ENCODE measurements at regions of chr6 and their contacts with region 1.

Region 1: GRCh38 chr6:7615611-7616383 is 25.8 kb downstream of the SNRNP48 start:
- DNase-seq: peak; percentile 18 to 57
- ATAC-seq: peak; percentile 72 to 80; a peak in 5 of 6 replicates
- H3K4me3 ChIP-seq: no peak overlapping the region
- H3K27ac ChIP-seq: peak overlapping the region; percentile 43 to 63
- H3K4me1 ChIP-seq: peaks cover 10% of the 10 kb centered on the region; the same call in 1 of the 3 replicates
- CTCF ChIP-seq: peak; percentile 77
- EP300 ChIP-seq: no peak
- POLR2A ChIP-seq: no peak
- RAD21 ChIP-seq: peak; percentile 83 to 84

Region 2: DNA sequence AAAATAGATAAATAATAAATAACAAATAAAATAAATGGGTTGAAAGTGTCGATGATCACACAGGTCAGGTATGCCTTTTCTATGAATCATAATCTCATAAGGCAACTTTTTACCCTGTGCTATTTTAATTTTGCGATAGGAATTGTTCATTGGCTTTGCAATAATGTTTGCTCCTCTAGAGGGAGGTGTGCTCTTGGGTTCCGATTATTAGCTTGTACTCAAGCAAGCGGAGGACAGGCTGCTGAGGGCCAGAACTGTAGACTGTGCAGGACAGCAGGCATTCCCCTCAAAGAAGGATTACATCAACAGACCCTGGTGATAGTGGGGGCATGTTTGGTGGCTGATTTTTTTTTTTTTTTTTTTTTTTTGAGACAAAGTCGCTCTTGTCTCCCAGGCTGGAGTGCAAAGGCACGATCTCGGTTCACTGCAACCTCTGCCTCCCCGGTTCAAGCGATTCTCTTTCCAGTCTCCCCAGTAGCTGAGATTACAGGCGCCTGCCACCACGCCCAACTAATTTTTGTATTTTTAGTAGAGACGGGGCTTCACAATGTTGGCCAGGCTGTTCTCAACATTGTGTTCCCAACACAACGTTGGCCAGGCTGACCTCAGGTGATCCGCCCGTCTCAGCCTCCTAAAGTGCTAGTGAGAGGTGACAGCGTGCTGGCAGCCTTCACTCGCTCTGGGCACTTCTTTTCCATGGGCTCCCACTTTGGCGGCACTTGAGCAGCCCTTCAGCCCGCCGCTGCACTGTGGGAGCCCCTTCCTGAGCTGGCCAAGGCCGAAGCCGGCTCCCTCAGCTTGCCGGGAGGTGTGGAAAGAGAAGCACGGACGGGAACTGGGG is 190.6 kb before region 1 on chr6:
- CTCF ChIA-PET with region 1: interaction called, 10 read pairs
- POLR2A ChIA-PET with region 1: no interaction called
- DNase-seq: peak; percentile 29 to 56
- ATAC-seq: peak; percentile 86 to 89
- H3K4me3 ChIP-seq: no peak overlapping the region
- H3K27ac ChIP-seq: no peak overlapping the region
- H3K4me1 ChIP-seq: 0 out of 3 replicates have a peak, but pooled peaks cover 4% of the 10 kb centered on the region
- CTCF ChIP-seq: peak; percentile 42; the same call in 2 of the 3 replicates
- EP300 ChIP-seq: no peak
- POLR2A ChIP-seq: no peak
- RAD21 ChIP-seq: peak; percentile 61 to 62

Region 3: DNA sequence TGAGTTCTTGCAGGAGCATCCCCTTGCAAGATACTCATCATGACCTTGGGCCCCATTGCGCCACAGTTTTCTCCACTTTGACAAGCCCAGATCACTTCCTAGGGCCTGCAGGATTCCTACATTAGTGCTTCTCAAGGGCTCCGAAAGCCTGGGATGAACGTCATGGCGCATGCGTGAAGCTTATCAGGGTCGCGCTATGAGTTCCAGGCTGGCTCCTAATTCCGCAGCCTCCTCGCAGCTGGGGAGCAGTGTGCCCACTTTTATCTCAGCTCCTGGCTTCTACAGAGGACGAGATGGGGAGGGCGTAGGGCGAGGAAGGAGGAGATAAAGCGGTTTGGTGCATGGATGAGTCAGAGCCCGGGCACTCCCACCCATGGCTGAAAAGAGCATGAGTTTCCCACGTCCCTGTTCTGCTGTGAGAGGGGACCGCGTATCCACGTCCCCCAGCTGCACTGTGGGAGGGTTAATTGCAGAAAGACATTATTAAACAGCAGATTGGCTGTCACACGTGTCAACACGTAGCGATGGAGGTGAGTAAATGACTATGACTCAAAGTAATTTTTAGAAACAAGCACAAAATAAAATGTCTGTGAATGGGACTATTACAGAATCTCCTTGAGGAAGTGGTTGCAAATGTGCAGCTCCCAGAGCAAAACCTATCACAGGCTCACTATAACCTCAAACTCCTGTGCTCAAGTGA is 147.3 kb before region 1 on chr6:
- CTCF ChIA-PET with region 1: no interaction called
- POLR2A ChIA-PET with region 1: no interaction called
- DNase-seq: peak; percentile 64 to 75
- ATAC-seq: peak; percentile 92
- H3K4me3 ChIP-seq: peak overlapping the region; percentile 38
- H3K27ac ChIP-seq: peak overlapping the region; percentile 58 to 88
- H3K4me1 ChIP-seq: peaks cover 18% of the 10 kb centered on the region
- CTCF ChIP-seq: no peak
- EP300 ChIP-seq: no peak
- POLR2A ChIP-seq: peak; percentile 33
- RAD21 ChIP-seq: no peak

Measured in A549 (cell line).